GM10248 (cell line): ENCODE measurements at regions of chr12 and their contacts with region 1.

Region 1: GRCh38 chr12:12315838-12316237 is 34.2 kb downstream of the MANSC1 start:
- DNase-seq: no peak
- CTCF ChIP-seq: no peak

Region 2: DNA sequence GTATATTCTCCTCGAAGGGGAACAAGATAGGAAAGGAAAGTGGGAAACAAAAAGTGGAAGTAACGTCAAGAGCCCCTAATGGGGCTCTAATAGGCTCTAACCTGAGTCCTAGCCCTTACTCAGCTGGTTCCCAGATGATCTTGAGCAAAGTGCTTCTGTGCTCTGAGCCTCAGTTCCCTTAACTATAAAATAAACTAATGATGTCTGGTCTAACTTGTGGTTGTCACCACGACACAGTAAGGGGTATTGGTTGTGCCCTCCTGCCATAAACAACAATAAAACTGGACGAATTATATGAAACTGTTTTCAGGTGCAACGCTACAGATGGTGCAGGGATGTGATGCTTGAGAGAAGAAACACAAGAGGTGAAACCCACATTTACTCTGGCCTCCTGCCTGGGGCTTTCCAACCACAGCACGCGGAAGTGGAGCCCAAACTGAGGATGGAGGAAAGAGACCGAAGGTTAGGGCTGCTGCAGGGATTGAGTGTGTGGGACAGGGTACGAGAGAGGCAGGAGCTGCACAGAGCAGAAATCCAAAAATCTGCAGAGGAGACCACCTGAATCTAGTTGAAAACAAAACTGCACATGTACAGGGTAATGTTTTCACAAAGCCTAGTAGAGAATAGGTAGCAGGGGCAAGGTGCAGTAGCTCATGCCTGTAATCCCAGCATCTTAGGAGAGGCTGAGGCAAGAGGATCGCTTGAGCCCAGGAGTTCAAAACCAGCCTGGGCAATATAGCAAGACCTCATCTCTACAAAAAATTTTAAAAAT is 290.7 kb before region 1 on chr12:
- CTCF ChIA-PET with region 1: no interaction called
- POLR2A ChIA-PET with region 1: no interaction called
- DNase-seq: peak; percentile 55
- CTCF ChIP-seq: no peak

Region 3: GRCh38 chr12:12294215-12295005 is 21.4 kb before region 1 on chr12:
- CTCF ChIA-PET with region 1: no interaction called
- POLR2A ChIA-PET with region 1: no interaction called
- DNase-seq: no peak
- CTCF ChIP-seq: no peak

Region 4: DNA sequence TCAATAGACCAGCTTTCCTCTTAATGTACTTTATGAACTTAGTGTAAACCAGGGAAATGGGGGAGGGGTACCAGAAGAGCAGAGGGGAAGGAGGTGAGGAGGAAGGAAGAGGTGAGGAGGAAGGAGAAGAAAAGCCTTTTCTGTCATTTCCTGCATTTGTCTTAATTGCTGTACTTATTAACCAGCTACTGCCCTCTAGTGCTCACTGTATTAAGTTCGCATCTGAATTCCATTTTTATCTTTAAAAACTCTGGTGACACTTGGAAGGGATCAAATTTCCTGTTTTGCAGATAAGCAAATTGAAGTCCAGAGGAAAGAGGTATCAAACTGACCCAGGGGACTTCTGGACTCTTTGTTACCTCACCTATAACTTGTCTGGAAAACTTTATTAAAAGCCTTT is 12.0 kb after region 1 on chr12:
- CTCF ChIA-PET with region 1: interaction called, 15 read pairs
- POLR2A ChIA-PET with region 1: no interaction called
- DNase-seq: peak; percentile 65
- CTCF ChIP-seq: peak; percentile 74